Activated CD4-positive, alpha-beta T cell treated with anti-CD3 and anti-CD28 coated beads for 36 hours (primary cell): ENCODE measurements at regions of chr1 and their contacts with region 1.

Region 1: GRCh38 chr1:167968569-167968968 is 31.7 kb upstream of the MPC2 start:
- DNase-seq: no peak
- ATAC-seq: no peak
- H3K4me3 Mint-ChIP-seq: no peak overlapping the region
- H3K27ac Mint-ChIP-seq: no peak overlapping the region
- H3K4me1 Mint-ChIP-seq: no peaks in the 10 kb centered on the region
- H3K27me3 Mint-ChIP-seq: no peaks in the 10 kb centered on the region

Region 2: DNA sequence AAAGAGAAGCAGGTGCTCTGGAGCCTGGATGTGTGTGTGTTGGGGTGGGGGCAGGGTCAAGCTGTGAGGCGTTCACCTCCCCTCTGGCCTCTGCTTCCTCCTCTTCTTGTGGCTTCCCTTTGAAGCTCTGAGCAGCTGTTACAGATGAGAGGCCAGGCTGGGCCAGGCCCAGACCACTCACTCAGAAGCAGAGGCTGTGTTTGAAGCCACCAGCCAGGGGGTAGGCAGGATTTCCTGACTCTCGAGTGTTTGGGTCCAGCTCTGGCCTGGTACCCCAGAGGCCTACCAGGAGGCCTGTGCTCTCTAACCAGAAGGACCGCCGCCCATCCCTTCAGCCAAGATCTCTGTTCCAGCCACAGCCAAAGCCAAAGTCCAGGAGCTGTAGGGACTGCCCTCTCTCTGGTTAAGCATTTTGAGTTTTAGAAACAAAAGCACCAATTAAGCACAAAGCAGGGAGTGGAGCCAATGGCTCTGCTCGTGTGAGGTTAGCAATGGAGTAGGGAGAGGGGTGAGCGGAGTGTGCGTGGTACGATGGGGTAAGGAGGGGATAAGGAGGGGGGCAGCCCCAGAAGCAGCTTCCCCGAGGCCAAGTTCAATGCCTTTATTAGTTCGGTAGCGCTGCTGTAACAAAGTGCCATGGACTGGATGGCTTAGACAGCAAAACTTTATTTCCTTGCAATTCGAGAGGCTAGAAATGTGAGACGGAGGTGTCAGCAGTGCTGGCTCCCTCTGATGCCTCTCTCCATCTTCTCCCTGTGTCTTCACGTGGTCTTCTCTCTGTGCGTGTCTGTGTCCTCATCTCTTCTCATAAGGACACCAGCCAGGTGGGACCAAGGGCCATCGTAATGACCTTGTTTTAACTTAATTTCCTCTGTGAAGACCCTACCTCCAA is 318.1 kb before region 1 on chr1:
- CTCF ChIA-PET with region 1: no interaction called
- POLR2A ChIA-PET with region 1: no interaction called
- intact Hi-C with region 1: no loop called
- DNase-seq: peak; percentile 19
- ATAC-seq: peak; percentile 35
- H3K4me3 Mint-ChIP-seq: no peak overlapping the region
- H3K27ac Mint-ChIP-seq: peak overlapping the region; percentile 72
- H3K4me1 Mint-ChIP-seq: peaks cover 74% of the 10 kb centered on the region
- H3K27me3 Mint-ChIP-seq: no peaks in the 10 kb centered on the region

Region 3: DNA sequence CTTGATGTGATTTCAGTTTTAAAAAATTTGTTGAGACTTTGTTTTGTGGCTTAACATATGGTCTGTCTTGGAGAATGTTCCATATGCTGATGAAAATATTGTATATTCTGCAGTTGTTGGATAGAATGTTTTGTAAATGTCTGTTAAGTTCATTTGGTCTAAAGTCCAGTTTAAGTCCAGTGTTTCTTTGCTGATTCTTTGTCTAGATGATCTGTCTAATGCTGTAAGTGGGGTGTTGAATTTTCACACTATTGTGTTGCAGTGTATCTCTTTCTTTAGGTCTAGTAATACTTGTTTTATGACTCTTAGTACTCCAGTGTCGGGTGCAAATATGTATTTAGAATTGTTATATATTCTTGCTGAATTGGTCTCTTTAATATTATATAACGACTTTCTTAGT is 20.8 kb before region 1 on chr1:
- CTCF ChIA-PET with region 1: interaction called, 3 read pairs
- POLR2A ChIA-PET with region 1: no interaction called
- intact Hi-C with region 1: loop called in 1 of 2 experiments (anchors 2 kb)
- DNase-seq: no peak
- ATAC-seq: no peak
- H3K4me3 Mint-ChIP-seq: no peak overlapping the region
- H3K27ac Mint-ChIP-seq: peak overlapping the region; percentile 22
- H3K4me1 Mint-ChIP-seq: peaks cover 36% of the 10 kb centered on the region
- H3K27me3 Mint-ChIP-seq: no peaks in the 10 kb centered on the region